Activated CD8-positive, alpha-beta T cell treated with anti-CD3 and anti-CD28 coated beads, Interleukin-2, amount 10 ng/mL, durations not matched to agents 7 days and 5 days (primary cell): ENCODE measurements at regions of chr1 and their contacts with region 1.

Region 1: DNA sequence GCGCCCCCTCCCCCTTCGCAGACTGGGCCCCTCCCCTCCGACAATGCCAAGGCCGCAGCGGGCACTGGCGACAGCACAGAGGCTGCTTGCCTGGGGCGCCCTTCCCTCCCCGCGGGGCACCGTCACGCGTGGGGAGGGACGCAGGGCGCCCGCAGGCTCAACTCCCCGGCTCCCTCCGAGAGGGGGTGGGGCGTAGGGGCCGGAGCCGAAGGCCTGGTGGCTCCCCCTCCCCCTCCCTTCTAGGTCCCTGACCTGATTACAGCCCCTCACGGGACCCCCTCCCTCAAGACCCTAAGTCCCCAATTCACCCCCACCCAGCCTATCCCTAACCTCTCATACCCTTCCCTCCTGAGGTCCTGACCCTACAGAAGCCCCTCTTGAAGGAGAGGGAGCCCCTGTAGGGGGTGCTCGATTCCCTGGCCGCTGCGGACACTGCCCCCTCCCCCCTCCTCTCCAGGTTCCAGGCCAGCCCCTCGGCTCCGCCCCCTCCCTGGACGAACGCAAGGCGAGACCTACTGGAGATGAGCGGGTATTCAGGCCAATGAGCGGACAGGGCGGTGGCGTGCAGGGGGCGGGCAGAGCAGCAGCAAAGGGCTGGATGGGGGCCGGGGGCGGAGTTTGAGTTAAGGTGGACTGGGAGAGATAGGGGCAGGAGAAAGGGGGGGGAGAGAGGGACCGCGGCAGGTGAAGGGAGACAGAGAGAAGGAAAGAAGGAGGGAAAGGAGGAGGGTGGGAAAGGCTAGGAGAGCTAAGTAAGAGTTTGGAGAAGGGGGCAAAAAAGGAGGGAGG is 733 bp upstream of the ZBTB7B start:
- DNase-seq: peak; percentile 100
- ATAC-seq: peak; percentile 76
- H3K4me3 Mint-ChIP-seq: peak overlapping the region; percentile 86
- H3K27ac Mint-ChIP-seq: peak overlapping the region; percentile 97
- H3K4me1 Mint-ChIP-seq: peaks cover 62% of the 10 kb centered on the region
- H3K27me3 Mint-ChIP-seq: no peaks in the 10 kb centered on the region

Region 2: GRCh38 chr1:154819628-154820590 is 182.0 kb before region 1 on chr1:
- CTCF ChIA-PET with region 1: no interaction called
- POLR2A ChIA-PET with region 1: no interaction called
- DNase-seq: peak; percentile 38
- ATAC-seq: peak; percentile 75
- H3K4me3 Mint-ChIP-seq: no peak overlapping the region
- H3K27ac Mint-ChIP-seq: peak overlapping the region; percentile 75
- H3K4me1 Mint-ChIP-seq: peaks cover 16% of the 10 kb centered on the region
- H3K27me3 Mint-ChIP-seq: peaks cover 2% of the 10 kb centered on the region

Region 3: DNA sequence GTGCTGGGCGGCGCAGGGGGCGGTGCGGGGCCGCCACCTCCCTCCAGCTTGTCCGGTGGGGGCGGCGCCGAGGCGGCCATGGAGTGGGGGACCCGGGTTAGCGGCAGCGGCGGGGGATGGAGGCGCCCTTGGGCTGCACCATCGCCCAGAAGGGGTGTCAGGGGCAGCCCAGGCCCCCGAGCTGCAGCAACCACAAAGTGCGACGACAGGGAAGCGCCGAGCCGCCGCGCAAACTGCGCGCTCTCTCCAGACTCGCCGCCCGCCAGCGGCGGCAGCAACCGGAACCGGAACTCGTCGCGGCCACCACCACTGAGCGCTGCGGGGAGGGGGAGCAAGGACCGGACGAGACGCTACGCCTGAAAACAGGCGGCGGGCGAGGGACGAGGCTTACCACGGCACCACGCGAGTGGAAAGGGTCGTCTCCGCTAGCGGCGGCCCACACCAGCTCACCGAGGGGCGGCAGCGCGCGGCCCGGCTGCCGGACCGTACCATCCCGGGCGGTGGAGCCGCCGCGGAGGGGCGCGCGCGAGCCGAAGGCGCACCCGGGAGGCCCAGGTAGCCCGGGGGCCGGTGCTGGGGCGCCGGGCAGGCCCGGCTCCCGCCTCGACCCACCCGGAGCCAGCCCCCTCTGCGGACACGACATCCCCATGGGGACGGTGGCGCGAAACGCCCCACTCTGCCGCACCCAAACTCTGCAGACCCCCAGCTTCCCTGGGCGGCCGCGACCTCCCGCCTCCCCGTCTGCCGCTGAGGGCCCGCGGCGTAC is 40.2 kb before region 1 on chr1 and contains the start of gene PYGO2:
- CTCF ChIA-PET with region 1: interaction called, 51 read pairs
- POLR2A ChIA-PET with region 1: interaction called, 8 read pairs
- DNase-seq: peak; percentile 85
- ATAC-seq: peak; percentile 83
- H3K4me3 Mint-ChIP-seq: peak within 1 kb of the TSS; percentile 94
- H3K27ac Mint-ChIP-seq: peak within 1 kb of the TSS; percentile 89
- H3K4me1 Mint-ChIP-seq: peaks cover 43% of the 10 kb centered on the region
- H3K27me3 Mint-ChIP-seq: no peaks in the 10 kb centered on the region
- total RNA-seq, gene PYGO2: 40.2 to 43.9 TPM

Region 4: DNA sequence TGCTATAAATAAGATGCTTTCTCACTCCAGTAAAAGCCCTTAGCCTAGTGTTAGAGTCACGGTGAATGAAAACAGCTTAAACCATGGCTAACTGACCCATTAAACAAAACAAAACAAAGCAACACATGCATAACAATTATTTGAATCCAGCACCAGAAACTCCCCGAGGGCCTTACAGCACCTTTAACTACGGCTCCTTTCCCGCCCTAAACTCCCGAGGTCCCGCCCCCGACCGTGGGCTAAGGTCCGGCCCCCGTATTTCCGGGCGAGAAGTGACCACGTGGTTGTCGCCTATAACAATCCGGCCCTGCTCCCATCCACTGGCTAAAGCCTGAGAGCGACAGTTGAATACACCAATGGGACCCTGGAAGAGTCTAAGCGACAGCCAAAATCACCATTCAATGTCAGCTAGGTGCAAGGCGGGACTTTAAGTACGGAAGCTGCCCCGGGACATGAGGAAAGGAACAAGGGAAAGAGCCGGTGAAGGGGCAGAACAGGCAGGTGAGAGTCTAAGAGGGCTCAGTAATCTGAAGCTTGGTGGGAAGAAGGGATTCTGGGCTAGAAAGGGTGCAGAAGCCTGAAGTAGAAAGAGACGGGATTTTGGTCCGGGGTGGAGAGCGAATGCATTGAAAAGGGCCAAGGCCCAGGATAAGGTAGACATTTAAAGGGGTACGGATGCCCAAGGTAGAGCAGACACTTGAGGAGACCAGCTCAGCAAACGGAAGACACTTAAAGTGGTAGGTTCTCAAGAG is 18.8 kb before region 1 on chr1 and contains the start of gene FLAD1:
- CTCF ChIA-PET with region 1: interaction called, 139 read pairs
- POLR2A ChIA-PET with region 1: interaction called, 28 read pairs
- DNase-seq: peak; percentile 99
- ATAC-seq: peak; percentile 100
- H3K4me3 Mint-ChIP-seq: no peak within 1 kb of the TSS
- H3K27ac Mint-ChIP-seq: peak within 1 kb of the TSS; percentile 67
- H3K4me1 Mint-ChIP-seq: peaks cover 20% of the 10 kb centered on the region
- H3K27me3 Mint-ChIP-seq: no peaks in the 10 kb centered on the region
- total RNA-seq, gene FLAD1: 39.8 to 45.2 TPM

Region 5: GRCh38 chr1:155044812-155045690 is 43.2 kb after region 1 on chr1:
- CTCF ChIA-PET with region 1: interaction called, 14 read pairs
- POLR2A ChIA-PET with region 1: no interaction called
- DNase-seq: peak; percentile 81
- ATAC-seq: peak; percentile 96
- H3K4me3 Mint-ChIP-seq: no peak overlapping the region
- H3K27ac Mint-ChIP-seq: peak overlapping the region; percentile 47
- H3K4me1 Mint-ChIP-seq: peaks cover 18% of the 10 kb centered on the region
- H3K27me3 Mint-ChIP-seq: peaks cover 6% of the 10 kb centered on the region

Region 6: DNA sequence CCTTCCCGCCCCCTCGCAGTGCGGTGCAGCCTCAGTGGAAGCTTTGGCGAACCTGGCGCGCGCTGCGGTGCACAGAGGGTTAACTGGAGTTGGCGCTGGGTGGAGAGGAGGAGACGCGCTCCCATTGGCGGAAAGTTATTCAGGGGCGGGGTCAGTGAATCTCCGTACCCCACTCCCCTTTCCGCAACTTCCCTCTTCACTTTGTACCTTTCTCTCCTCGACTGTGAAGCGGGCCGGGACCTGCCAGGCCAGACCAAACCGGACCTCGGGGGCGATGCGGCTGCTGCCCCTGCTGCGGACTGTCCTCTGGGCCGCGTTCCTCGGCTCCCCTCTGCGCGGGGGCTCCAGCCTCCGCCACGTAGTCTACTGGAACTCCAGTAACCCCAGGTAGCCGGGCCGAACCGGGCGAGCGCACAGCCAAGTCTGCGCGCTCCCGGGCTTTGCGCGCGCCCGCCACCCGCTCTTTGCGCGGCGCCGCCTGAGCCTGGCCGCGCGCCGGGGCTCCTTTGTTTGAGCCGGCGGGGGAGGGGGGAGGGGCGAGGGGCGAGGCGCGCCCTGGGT is 61.8 kb after region 1 on chr1 and contains the start of gene EFNA4:
- CTCF ChIA-PET with region 1: interaction called, 18 read pairs
- POLR2A ChIA-PET with region 1: no interaction called
- DNase-seq: peak; percentile 90
- ATAC-seq: peak; percentile 85
- H3K4me3 Mint-ChIP-seq: peak within 1 kb of the TSS; percentile 89
- H3K27ac Mint-ChIP-seq: peak within 1 kb of the TSS; percentile 51
- H3K4me1 Mint-ChIP-seq: peaks cover 41% of the 10 kb centered on the region
- H3K27me3 Mint-ChIP-seq: no peaks in the 10 kb centered on the region
- total RNA-seq, gene EFNA4: 7.8 to 9.7 TPM